ENCODE measurements at regions of chr14 and their contacts with region 1.

Region 1: GRCh38 chr14:88667555-88668273 is 104.9 kb downstream of the ZC3H14 start:
- DNase-seq: peak; percentile 29
- H3K4me3 Mint-ChIP-seq: no peak overlapping the region
- H3K27ac Mint-ChIP-seq: no peak overlapping the region
- H3K4me1 Mint-ChIP-seq: no peaks in the 10 kb centered on the region
- H3K27me3 Mint-ChIP-seq: no peaks in the 10 kb centered on the region

Region 2: DNA sequence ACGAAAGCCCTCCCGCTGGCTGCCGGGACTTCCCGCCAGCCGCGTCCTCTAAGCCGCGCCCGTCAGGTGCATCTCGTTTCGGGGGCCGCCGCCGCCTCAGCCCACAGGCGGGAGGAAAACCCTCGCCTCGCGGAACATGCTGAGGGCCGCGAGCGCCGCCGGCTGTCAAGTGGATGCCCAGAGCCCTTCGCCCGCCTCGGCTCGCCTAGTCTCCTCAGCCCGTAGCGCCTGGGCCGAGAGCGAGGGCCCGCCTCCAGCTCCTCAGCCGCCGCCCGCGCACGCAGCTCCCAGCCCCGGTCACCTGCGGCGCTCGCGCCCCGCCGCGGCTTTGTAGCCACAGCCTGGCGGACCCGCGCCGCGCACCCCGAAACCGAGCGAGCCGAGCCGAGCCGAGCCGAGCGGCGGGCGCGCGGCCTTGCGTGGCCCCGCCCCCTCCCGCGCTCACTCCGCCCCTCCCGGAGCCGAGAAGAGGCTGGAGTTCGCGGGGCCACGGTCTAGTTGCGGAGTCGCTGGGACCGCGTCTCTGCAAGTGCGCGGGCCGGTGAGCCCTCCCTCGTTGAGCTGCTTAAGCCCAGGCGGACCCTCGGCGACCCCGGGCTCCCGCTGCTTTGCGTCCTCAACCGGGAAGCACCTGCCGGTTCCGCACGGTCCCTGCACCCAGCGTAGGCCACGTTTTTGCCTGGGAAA is 125.0 kb after region 1 on chr14 and contains the start of gene EML5:
- intact Hi-C with region 1: loop called (anchors 1 kb)
- DNase-seq: peak; percentile 75
- H3K4me3 Mint-ChIP-seq: peak within 1 kb of the TSS; percentile 82
- H3K27ac Mint-ChIP-seq: peak within 1 kb of the TSS; percentile 71
- H3K4me1 Mint-ChIP-seq: peaks cover 13% of the 10 kb centered on the region
- H3K27me3 Mint-ChIP-seq: peaks cover 31% of the 10 kb centered on the region
- total RNA-seq, gene EML5: 1.5 and 1.7 TPM in 2 replicates

Region 3: DNA sequence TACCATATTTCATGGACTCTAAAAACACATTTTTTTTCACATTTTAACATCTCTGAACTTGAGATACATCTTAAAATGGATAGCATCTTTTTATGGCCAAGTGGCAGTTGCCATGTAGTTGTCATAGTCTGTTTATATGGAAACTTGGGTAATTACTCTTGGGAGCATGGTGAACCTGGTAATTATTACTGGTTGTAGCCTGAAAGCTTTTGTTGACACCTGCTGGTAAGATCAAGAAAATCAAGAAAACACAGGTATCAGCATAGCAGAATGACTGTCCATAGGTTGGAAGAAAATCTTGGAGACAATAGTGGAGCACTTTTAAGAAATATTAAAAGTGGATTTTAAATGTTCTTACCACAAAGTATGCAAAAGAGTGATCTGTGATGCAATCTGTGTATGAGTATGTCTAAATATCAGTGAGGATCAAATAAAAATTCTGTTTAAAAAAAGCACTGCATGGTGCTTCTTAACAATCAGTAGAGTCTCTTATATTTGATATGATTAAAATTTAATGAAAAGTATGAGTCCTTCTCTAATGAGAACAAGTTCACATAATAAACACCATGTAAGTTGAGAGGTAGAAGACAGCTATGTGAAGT is 200.9 kb after region 1 on chr14:
- intact Hi-C with region 1: loop called (anchors 1 kb)
- DNase-seq: no peak
- H3K4me3 Mint-ChIP-seq: no peak overlapping the region
- H3K27ac Mint-ChIP-seq: no peak overlapping the region
- H3K4me1 Mint-ChIP-seq: no peaks in the 10 kb centered on the region
- H3K27me3 Mint-ChIP-seq: peaks cover 2% of the 10 kb centered on the region

Region 4: GRCh38 chr14:89013084-89013504 is 345.4 kb after region 1 on chr14:
- intact Hi-C with region 1: loop called (anchors 2 kb)
- DNase-seq: no peak
- H3K4me3 Mint-ChIP-seq: no peak overlapping the region
- H3K27ac Mint-ChIP-seq: no peak overlapping the region
- H3K4me1 Mint-ChIP-seq: no peaks in the 10 kb centered on the region
- H3K27me3 Mint-ChIP-seq: peaks cover 12% of the 10 kb centered on the region

Region 5: GRCh38 chr14:89915114-89915878 is 1247.6 kb after region 1 on chr14:
- intact Hi-C with region 1: loop called (anchors 1 kb)
- DNase-seq: peak; percentile 38
- H3K4me3 Mint-ChIP-seq: no peak overlapping the region
- H3K27ac Mint-ChIP-seq: no peak overlapping the region
- H3K4me1 Mint-ChIP-seq: peaks cover 4% of the 10 kb centered on the region
- H3K27me3 Mint-ChIP-seq: peaks cover 12% of the 10 kb centered on the region

Measured in activated T-helper 1 cell treated with anti-CD3 and anti-CD28 coated beads, Interleukin-12 subunit alpha, Interleukin-12 subunit beta, Interleukin-2, Interleukin-4 antibody, amounts not matched to agents 30 ng/mL and 10 ng/mL and 1 ng/mL, durations not matched to agents 14 hours and 24 hours and 36 hours (primary cell).